ENCODE measurements at regions of chr2 and their contacts with region 1.

Region 1: GRCh38 chr2:126971481-126972278 is 73.0 kb downstream of the TEX51 start:
- DNase-seq: peak; percentile 82
- ATAC-seq: peak; percentile 95
- H3K4me3 Mint-ChIP-seq: no peak overlapping the region
- H3K27ac Mint-ChIP-seq: no peak overlapping the region
- H3K4me1 Mint-ChIP-seq: no peaks in the 10 kb centered on the region
- H3K27me3 Mint-ChIP-seq: peaks cover 35% of the 10 kb centered on the region

Region 2: GRCh38 chr2:126244937-126245336 is 726.7 kb before region 1 on chr2:
- CTCF ChIA-PET with region 1: interaction called, 6 read pairs
- POLR2A ChIA-PET with region 1: no interaction called
- intact Hi-C with region 1: loop called in 1 of 2 experiments (anchors 10 kb)
- DNase-seq: peak; percentile 76
- ATAC-seq: no peak
- H3K4me3 Mint-ChIP-seq: no peak overlapping the region
- H3K27ac Mint-ChIP-seq: no peak overlapping the region
- H3K4me1 Mint-ChIP-seq: no peaks in the 10 kb centered on the region
- H3K27me3 Mint-ChIP-seq: peaks cover 11% of the 10 kb centered on the region

Region 3: GRCh38 chr2:126399001-126399400 is 572.7 kb before region 1 on chr2:
- CTCF ChIA-PET with region 1: no interaction called
- POLR2A ChIA-PET with region 1: no interaction called
- intact Hi-C with region 1: loop called in 1 of 2 experiments (anchors 2 kb)
- DNase-seq: peak; percentile 47
- ATAC-seq: no peak
- H3K4me3 Mint-ChIP-seq: no peak overlapping the region
- H3K27ac Mint-ChIP-seq: no peak overlapping the region
- H3K4me1 Mint-ChIP-seq: no peaks in the 10 kb centered on the region
- H3K27me3 Mint-ChIP-seq: peaks cover 14% of the 10 kb centered on the region

Region 4: DNA sequence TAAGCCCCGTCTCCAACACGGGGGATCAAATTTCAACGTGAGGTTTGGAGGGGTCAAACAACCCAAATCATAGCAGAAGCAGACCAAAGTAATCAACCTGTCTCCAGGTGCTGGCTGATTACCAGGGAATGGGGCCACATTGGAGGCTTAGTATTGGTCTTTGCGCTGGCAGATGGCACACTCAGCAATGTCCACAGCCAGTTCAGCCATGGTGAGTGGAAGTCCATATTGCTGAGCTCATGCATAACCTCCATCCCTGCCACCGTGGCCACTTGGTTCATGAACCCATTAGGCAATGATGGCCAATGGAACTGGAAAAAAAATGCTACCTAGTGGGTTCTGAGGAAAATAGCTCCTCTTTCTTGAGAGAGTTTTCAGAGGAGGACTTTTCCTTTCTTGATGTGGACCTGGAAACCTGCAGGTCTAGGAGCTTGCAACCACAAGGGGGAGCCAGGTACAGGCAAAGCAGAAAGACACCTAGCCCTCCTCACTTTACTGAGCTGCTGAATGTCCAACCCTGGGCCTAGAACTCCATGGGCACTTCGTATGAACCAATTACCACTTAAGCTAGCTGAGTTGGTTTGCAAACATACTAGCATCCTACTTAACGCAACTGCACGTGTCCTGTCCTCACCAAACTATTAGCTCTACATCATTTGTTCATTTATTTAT is 443.7 kb before region 1 on chr2:
- CTCF ChIA-PET with region 1: interaction called, 4 read pairs
- POLR2A ChIA-PET with region 1: no interaction called
- intact Hi-C with region 1: loop called in 1 of 2 experiments (anchors 2 kb)
- DNase-seq: peak; percentile 82
- ATAC-seq: peak; percentile 65
- H3K4me3 Mint-ChIP-seq: no peak overlapping the region
- H3K27ac Mint-ChIP-seq: no peak overlapping the region
- H3K4me1 Mint-ChIP-seq: no peaks in the 10 kb centered on the region
- H3K27me3 Mint-ChIP-seq: peaks cover 2% of the 10 kb centered on the region

Region 5: GRCh38 chr2:126749537-126749936 is 222.1 kb before region 1 on chr2:
- CTCF ChIA-PET with region 1: no interaction called
- POLR2A ChIA-PET with region 1: no interaction called
- intact Hi-C with region 1: no loop called
- DNase-seq: peak; percentile 28
- ATAC-seq: peak; percentile 57
- H3K4me3 Mint-ChIP-seq: no peak overlapping the region
- H3K27ac Mint-ChIP-seq: no peak overlapping the region
- H3K4me1 Mint-ChIP-seq: peaks cover 5% of the 10 kb centered on the region
- H3K27me3 Mint-ChIP-seq: no peaks in the 10 kb centered on the region

Region 6: DNA sequence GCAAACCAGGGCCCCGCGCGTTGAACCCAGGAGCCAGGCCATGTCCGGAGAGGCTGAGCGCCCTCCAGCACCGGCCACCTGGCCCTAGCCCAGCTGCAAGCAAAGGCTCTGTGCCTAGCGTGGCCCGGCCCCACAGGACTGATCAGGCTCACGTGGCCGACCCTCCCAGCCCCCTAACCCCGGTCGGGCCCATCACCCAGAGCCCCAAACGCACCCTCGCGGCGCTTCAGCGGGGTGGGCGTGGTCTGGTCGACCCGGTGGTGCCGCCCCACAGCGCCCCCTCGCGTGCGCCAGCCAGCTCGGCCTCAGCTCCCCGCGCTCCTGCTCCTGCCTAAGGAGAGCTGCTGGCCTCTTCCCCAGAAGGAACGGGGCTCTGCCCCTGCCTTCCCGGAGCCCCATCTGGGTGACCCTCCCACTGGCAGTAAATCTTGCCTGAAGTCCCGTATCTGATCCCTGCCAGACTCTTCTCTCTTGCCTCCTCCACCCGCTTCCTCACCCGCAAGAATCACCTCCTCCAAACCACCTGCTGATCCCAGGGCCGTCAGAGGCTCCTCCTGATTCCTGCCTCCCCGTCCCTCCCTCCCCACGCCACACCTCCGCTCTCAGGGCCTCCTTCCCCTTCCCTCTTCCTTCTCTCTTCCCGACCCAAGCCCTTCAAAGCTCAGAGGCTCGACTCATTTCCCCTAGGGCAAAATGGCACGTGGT is 85.3 kb before region 1 on chr2:
- CTCF ChIA-PET with region 1: interaction called, 6 read pairs
- POLR2A ChIA-PET with region 1: no interaction called
- intact Hi-C with region 1: loop called (anchors 2 kb)
- DNase-seq: peak; percentile 83
- ATAC-seq: peak; percentile 96
- H3K4me3 Mint-ChIP-seq: no peak overlapping the region
- H3K27ac Mint-ChIP-seq: no peak overlapping the region
- H3K4me1 Mint-ChIP-seq: peaks cover 7% of the 10 kb centered on the region
- H3K27me3 Mint-ChIP-seq: peaks cover 12% of the 10 kb centered on the region

Region 7: GRCh38 chr2:126954831-126955230 is 16.8 kb before region 1 on chr2:
- CTCF ChIA-PET with region 1: interaction called, 12 read pairs
- POLR2A ChIA-PET with region 1: no interaction called
- intact Hi-C with region 1: no loop called
- DNase-seq: no peak
- ATAC-seq: no peak
- H3K4me3 Mint-ChIP-seq: no peak overlapping the region
- H3K27ac Mint-ChIP-seq: no peak overlapping the region
- H3K4me1 Mint-ChIP-seq: no peaks in the 10 kb centered on the region
- H3K27me3 Mint-ChIP-seq: peaks cover 19% of the 10 kb centered on the region

Region 8: GRCh38 chr2:127049927-127050802 is 78.5 kb after region 1 on chr2:
- CTCF ChIA-PET with region 1: interaction called, 8 read pairs
- POLR2A ChIA-PET with region 1: no interaction called
- intact Hi-C with region 1: loop called in 1 of 2 experiments (anchors 1 kb)
- DNase-seq: peak; percentile 80
- ATAC-seq: peak; percentile 81
- H3K4me3 Mint-ChIP-seq: no peak overlapping the region
- H3K27ac Mint-ChIP-seq: peak overlapping the region; percentile 31
- H3K4me1 Mint-ChIP-seq: peaks cover 2% of the 10 kb centered on the region
- H3K27me3 Mint-ChIP-seq: no peaks in the 10 kb centered on the region